Ascending aorta (tissue), 2 donors: ENCODE measurements at regions of chr3 and their contacts with region 1.

Region 1: DNA sequence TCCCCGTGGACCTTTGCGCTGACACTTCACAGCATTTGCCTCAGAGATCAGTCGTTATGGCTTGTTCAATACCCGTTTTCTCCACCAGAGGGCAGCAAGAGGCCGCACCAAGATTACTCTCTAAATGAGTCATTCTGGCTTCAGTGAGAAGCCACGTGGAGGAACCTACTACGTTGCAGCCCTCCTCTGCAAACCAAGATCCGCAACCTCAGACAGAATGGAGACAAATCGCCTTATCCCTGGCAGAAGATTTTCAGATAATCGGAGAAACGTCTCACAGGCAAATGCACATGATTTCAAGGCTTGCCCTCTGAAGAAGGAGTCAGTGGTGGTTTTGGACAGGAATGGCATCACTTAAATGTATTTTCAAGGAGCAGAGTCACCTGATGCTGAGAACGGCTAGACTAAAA is 60.5 kb downstream of the GTPBP8 start:
- DNase-seq: peak; percentile 52 to 94
- H3K4me3 ChIP-seq: peak overlapping the region in 1 of 2 donors; percentile 27
- H3K27ac ChIP-seq: peak overlapping the region in 1 of 2 donors; percentile 14
- H3K4me1 ChIP-seq: peaks cover 0 to 6% of the 10 kb centered on the region in 2 donors
- H3K27me3 ChIP-seq: no peaks in the 10 kb centered on the region
- CTCF ChIP-seq: peak; percentile 90 to 93 (median 93)

Region 2: GRCh38 chr3:113136071-113136470 is 84.8 kb after region 1 on chr3:
- intact Hi-C with region 1: loop called (anchors 2 kb)
- DNase-seq: no peak
- H3K4me3 ChIP-seq: no peak overlapping the region
- H3K27ac ChIP-seq: no peak overlapping the region
- H3K4me1 ChIP-seq: no peaks in the 10 kb centered on the region
- H3K27me3 ChIP-seq: no peaks in the 10 kb centered on the region
- CTCF ChIP-seq: peak; percentile 39 to 65 (median 50)

Region 3: GRCh38 chr3:113287803-113288648 is 236.7 kb after region 1 on chr3:
- intact Hi-C with region 1: loop called (anchors 1 kb)
- DNase-seq: peak in 1 of 2 donors; percentile 81
- H3K4me3 ChIP-seq: no peak overlapping the region
- H3K27ac ChIP-seq: peak overlapping the region in 1 of 2 donors; percentile 3
- H3K4me1 ChIP-seq: no peaks in the 10 kb centered on the region
- H3K27me3 ChIP-seq: no peaks in the 10 kb centered on the region
- CTCF ChIP-seq: peak; percentile 96 to 99 (median 98)

Region 4: DNA sequence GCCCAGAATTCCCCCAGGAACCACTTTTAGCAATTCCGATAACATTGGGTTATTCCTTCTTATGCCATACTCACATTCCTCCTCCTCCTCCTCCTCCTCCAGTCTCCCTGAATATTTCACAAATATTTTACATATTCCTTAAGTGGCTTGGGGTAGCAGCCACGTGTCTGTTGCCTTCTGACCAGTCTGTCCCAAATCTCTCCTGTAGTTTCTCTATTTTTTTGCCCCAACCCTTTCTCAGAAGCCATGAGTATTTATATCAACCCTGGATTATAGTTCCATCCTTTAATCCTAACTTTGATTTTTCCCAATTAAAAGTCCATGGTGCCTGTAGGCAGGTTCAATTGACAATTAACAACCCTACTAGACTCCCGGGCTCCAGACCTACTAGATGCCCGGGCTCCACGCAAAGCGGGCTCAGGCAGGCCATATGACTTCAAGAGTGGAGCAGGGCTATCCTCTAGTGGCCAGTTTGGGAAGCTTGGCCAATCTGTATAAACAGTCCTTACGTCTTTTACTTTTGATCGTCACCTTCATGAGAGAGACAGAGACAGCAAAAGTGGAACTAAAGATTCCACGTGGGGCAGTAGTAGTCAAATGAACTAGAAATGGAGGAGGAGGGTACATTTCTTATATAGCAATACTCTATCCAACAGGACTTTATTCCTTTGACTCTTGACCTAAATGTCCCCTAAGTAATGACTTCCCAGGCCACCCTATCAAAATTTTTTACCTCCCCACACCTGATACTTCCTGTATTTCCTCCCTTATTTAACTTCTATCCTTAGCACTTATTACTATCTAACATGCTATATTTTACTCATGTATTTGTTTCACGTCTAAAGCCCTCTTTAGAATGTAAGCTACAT is 575.4 kb after region 1 on chr3:
- intact Hi-C with region 1: loop called (anchors 2 kb)
- DNase-seq: peak in 1 of 2 donors; percentile 81
- H3K4me3 ChIP-seq: peak overlapping the region in 1 of 2 donors; percentile 13
- H3K27ac ChIP-seq: no peak overlapping the region
- H3K4me1 ChIP-seq: no peaks in the 10 kb centered on the region
- H3K27me3 ChIP-seq: no peaks in the 10 kb centered on the region
- CTCF ChIP-seq: peak; percentile 63 to 76 (median 73)